Right lobe of liver (tissue), 6 donors: ENCODE measurements at regions of chr13 and their contacts with region 1.

Region 1: GRCh38 chr13:99436686-99437416 is 64.4 kb upstream of the TM9SF2 start:
- DNase-seq: peak; percentile 85 to 86 (median 85)
- ATAC-seq: peak; percentile 80 to 91 (median 84)
- H3K4me3 ChIP-seq: peak overlapping the region in 2 of 3 donors; percentile 14 to 26
- H3K27ac ChIP-seq: no peak overlapping the region
- H3K4me1 ChIP-seq: no peaks in the 10 kb centered on the region
- H3K27me3 ChIP-seq: no peaks in the 10 kb centered on the region
- CTCF ChIP-seq: peak; percentile 99 to 100 (median 100)
- POLR2A ChIP-seq: no peak

Region 2: DNA sequence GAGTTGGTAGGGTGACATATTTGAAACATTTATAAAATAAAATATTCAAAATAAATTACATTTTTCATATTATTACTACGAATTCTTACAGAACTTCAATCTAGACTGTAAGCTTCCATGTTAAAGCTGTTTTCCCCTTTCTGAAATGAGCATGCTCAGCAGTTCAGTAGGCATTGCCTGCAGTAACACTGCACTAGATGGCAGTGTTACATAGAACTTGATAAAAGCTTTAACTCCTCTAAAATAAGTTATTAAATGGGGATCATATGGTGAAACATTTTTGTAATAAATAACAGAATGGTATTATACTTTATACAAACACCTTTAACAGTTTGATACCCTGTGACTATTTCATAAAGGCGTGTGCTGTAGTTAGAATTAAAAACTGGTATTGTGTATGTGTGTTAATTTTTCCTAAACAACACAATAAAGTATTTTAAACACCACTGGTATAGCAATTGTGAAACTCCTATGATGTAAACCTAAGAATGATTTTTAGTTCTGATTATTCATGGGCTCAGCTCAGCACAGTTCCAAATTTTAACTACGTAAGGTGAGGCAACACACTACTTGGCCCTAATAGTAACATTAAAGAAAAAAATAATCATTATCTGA is 167.1 kb before region 1 on chr13:
- intact Hi-C with region 1: loop called (anchors 5 kb)
- DNase-seq: no peak
- ATAC-seq: peak; percentile 77 to 91 (median 87)
- H3K4me3 ChIP-seq: no peak overlapping the region
- H3K27ac ChIP-seq: no peak overlapping the region
- H3K4me1 ChIP-seq: peaks cover 0 to 4% (median 0%) of the 10 kb centered on the region in 4 donors
- H3K27me3 ChIP-seq: no peaks in the 10 kb centered on the region
- CTCF ChIP-seq: peak; percentile 72 to 87 (median 80)
- POLR2A ChIP-seq: no peak